HepG2 (cell line): ENCODE measurements at regions of chr20 and their contacts with region 1.

Region 1: DNA sequence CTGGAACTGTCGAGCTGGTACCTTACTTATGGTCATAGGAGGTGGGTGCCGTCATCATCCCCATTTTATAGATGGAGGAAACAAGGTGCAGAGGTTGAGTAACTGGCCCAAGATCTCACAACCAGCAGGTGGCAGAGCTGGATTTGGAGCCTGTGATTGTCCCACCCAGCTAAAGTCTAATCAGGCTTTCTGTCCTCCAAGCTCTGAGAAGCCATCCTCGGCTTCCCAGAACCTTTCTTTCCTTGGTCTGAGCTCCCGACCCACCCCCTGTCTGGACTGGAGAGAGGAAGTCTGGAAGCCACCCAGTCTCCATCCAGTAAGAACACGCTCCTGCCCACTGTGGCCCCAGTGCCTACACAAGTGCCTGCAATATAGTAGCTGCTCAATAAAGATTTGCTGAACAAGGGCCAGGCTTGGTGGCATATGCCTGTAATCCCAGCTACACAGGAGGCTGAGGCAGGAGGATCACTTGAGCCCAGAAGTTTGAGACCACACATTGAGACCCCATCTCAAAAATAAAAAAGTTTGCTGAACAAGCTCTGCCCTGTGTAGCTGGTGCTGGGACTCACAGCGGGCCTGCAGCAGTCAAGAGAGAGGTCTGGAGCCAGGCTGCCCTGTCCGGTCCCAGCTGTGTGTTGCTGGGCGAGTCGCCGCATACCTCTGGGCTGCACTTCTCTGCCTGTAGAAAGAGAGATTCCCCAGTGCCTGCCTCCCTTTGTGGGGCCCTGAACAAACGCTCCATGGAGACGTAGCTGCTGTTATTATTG is 32.5 kb upstream of the DLGAP4 start:
- DNase-seq: no peak
- ATAC-seq: no peak; the same call in 2 of the 3 replicates
- H3K4me3 ChIP-seq: no peak overlapping the region
- H3K27ac ChIP-seq: no peak overlapping the region
- H3K4me1 ChIP-seq: peaks cover 30% of the 10 kb centered on the region
- H3K27me3 ChIP-seq: peaks cover 0 to 27% of the 10 kb centered on the region in 2 experiments; a peak in 4 of 5 replicates
- CTCF ChIP-seq: peak; percentile 67
- EP300 ChIP-seq: no peak
- POLR2A ChIP-seq: no peak
- RAD21 ChIP-seq: no peak

Region 2: GRCh38 chr20:36193977-36194712 is 79.5 kb before region 1 on chr20:
- CTCF ChIA-PET with region 1: no interaction called
- POLR2A ChIA-PET with region 1: no interaction called
- in situ Hi-C with region 1: no loop called
- intact Hi-C with region 1: no loop called
- DNase-seq: no peak
- ATAC-seq: no peak
- H3K4me3 ChIP-seq: no peak overlapping the region
- H3K27ac ChIP-seq: no peak overlapping the region
- H3K4me1 ChIP-seq: no peaks in the 10 kb centered on the region
- H3K27me3 ChIP-seq: no peaks in the 10 kb centered on the region
- CTCF ChIP-seq: no peak
- EP300 ChIP-seq: no peak
- POLR2A ChIP-seq: no peak
- RAD21 ChIP-seq: no peak

Region 3: GRCh38 chr20:36235892-36236785 is 37.5 kb before region 1 on chr20 and contains the start of gene AAR2:
- CTCF ChIA-PET with region 1: no interaction called
- POLR2A ChIA-PET with region 1: interaction called, 12 read pairs
- in situ Hi-C with region 1: no loop called
- intact Hi-C with region 1: no loop called
- DNase-seq: peak; percentile 83
- ATAC-seq: peak; percentile 96
- H3K4me3 ChIP-seq: peak within 1 kb of the TSS; percentile 82 to 89 (median 88)
- H3K27ac ChIP-seq: peak within 1 kb of the TSS; percentile 75
- H3K4me1 ChIP-seq: peaks cover 35% of the 10 kb centered on the region
- H3K27me3 ChIP-seq: no peaks in the 10 kb centered on the region; a peak in 1 of 5 replicates
- CTCF ChIP-seq: peak; percentile 43; the same call in 1 of the 2 replicates
- EP300 ChIP-seq: peak in 1 of 2 experiments; percentile 60; a peak in 1 of 4 replicates
- POLR2A ChIP-seq: peak; percentile 94 to 96
- RAD21 ChIP-seq: peak; percentile 20
- total RNA-seq, gene AAR2: 46.2 and 56.5 TPM in 2 replicates

Region 4: DNA sequence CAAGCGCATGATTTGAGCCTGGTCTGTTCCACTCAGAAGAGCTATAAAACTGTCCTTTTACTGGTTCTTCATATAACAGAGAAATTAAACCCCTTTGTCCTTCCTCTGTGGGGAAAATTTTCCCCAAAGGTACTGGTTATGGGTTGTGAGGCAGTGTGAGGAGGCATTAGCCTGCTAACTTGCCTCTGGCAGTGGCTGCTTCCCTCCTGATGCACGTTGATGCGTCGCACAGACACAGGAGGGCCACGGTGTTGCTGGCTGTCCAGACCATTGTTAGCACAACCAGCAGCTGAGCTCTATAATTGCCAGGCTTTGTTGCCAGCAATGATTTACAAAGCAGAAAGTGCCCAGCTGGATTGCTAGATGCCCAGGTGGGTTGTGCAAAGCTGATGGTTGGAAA is 27.2 kb before region 1 on chr20:
- CTCF ChIA-PET with region 1: no interaction called
- POLR2A ChIA-PET with region 1: no interaction called
- in situ Hi-C with region 1: no loop called
- intact Hi-C with region 1: no loop called
- DNase-seq: no peak
- ATAC-seq: no peak
- H3K4me3 ChIP-seq: no peak overlapping the region
- H3K27ac ChIP-seq: no peak overlapping the region
- H3K4me1 ChIP-seq: no peaks in the 10 kb centered on the region
- H3K27me3 ChIP-seq: no peaks in the 10 kb centered on the region
- CTCF ChIP-seq: no peak
- EP300 ChIP-seq: no peak
- POLR2A ChIP-seq: no peak
- RAD21 ChIP-seq: no peak

Region 5: GRCh38 chr20:36259177-36260061 is 14.2 kb before region 1 on chr20:
- CTCF ChIA-PET with region 1: no interaction called
- POLR2A ChIA-PET with region 1: interaction called, 10 read pairs
- in situ Hi-C with region 1: no loop called
- intact Hi-C with region 1: no loop called
- DNase-seq: peak; percentile 32
- ATAC-seq: peak; percentile 30
- H3K4me3 ChIP-seq: no peak overlapping the region
- H3K27ac ChIP-seq: no peak overlapping the region
- H3K4me1 ChIP-seq: 0 out of 2 replicates have a peak, but pooled peaks cover 12% of the 10 kb centered on the region
- H3K27me3 ChIP-seq: peaks cover 0 to 24% of the 10 kb centered on the region in 2 experiments; a peak in 3 of 5 replicates
- CTCF ChIP-seq: 0 out of 2 replicates have a peak, but pooled peaks have one; percentile 15
- EP300 ChIP-seq: no peak
- POLR2A ChIP-seq: no peak
- RAD21 ChIP-seq: no peak

Region 6: DNA sequence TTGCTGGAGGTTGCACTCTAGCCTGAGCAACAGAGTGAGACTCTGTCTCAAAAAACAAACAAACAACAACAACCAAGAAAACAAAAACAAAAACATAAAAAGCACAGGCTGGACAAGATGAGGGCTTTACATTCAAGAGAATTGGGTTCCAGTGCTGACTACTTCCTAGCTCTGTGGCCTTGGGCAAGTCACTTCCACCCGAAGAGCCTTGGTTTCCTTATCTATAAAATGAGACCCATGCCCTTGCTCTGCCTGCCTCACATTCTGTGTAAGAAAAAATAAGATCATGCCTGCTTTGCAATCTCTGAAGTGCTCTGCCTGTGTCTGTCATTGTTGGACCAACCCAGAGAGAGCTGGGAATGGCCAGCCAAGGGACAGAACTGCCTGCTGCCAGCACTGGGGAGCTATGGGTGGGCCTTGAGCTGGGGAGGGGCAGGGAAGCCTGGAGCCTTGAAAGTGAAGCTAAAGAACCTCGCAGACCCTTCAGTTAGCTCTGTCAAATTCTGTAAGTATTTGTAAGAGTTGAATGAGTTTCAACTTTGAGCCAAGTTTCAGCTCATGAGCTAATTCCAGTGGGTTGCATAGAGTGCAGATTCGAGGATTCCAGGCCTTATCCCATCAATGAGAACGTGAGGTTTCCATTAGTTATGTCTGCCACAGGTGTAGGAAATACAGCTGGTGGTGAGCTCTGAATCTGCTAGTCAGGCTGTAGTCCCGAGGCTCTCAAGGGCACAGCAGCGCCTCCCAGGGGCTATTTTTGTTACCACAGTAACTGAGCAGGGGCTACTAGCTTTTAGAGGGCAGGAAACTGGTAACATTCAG is 125.8 kb after region 1 on chr20:
- CTCF ChIA-PET with region 1: interaction called, 4 read pairs
- POLR2A ChIA-PET with region 1: interaction called, 5 read pairs
- in situ Hi-C with region 1: no loop called
- intact Hi-C with region 1: loop called (anchors 10 kb)
- DNase-seq: peak; percentile 88
- ATAC-seq: peak; percentile 87
- H3K4me3 ChIP-seq: no peak overlapping the region; a peak in 1 of 6 replicates
- H3K27ac ChIP-seq: no peak overlapping the region
- H3K4me1 ChIP-seq: peaks cover 11% of the 10 kb centered on the region
- H3K27me3 ChIP-seq: peaks cover 0 to 27% of the 10 kb centered on the region in 2 experiments; a peak in 2 of 5 replicates
- CTCF ChIP-seq: peak; percentile 83
- EP300 ChIP-seq: peak in 1 of 2 experiments; percentile 61; a peak in 1 of 4 replicates
- POLR2A ChIP-seq: no peak
- RAD21 ChIP-seq: peak; percentile 90

Region 7: GRCh38 chr20:36439040-36439730 is 165.6 kb after region 1 on chr20:
- CTCF ChIA-PET with region 1: interaction called, 5 read pairs
- POLR2A ChIA-PET with region 1: no interaction called
- in situ Hi-C with region 1: loop called (anchors 5 kb)
- intact Hi-C with region 1: no loop called
- DNase-seq: peak; percentile 59
- ATAC-seq: peak; percentile 70
- H3K4me3 ChIP-seq: no peak overlapping the region
- H3K27ac ChIP-seq: no peak overlapping the region
- H3K4me1 ChIP-seq: no peaks in the 10 kb centered on the region
- H3K27me3 ChIP-seq: peaks cover 3 to 20% of the 10 kb centered on the region in 2 experiments; a peak in 3 of 5 replicates
- CTCF ChIP-seq: peak; percentile 98
- EP300 ChIP-seq: no peak
- POLR2A ChIP-seq: no peak
- RAD21 ChIP-seq: peak; percentile 95